A549 (cell line): ENCODE measurements at regions of chr3 and their contacts with region 1.

Region 1: DNA sequence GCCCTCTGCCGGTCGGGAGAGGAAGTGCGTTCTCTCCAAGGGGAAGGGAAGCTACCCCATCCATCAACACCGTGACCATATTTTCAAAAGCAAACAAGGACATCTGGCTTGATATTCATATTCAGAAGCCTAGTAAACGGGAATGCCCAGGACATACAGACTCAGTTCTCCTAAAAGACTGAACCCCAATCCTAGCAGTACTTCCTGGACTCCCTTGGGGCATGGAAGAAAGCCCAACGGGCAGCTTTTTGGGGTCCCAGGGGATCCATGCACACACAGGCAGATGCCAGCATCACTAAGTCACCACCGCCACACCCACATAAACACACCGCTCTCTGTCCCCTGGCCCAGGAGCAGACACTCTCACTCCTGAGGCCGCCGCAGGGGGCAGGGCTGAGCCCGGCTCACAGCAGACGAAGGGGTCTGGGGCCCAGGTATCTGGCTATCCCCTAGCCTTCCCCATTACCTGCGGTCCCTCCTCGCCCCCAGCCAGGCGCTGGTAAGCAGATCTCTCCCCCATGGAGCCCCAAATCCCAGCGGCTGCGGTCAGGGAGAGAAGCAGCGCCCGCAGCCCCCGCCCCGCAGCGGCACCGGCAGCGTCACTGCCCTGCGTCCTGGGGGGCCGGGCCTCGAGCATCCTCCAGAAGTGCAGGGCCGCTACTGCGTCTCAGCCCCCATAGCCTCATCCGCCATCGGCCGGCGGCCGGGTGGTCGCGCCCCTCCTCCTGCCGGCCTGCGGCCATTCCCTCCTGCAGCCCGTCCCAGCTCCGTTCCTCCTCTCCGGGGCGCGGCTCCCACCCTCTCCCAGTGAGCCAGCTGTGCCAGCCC is 13.4 kb downstream of the TNK2 start:
- DNase-seq: peak; percentile 78 to 79
- ATAC-seq: peak; percentile 83 to 84
- H3K4me3 ChIP-seq: peak overlapping the region; percentile 77
- H3K27ac ChIP-seq: peak overlapping the region; percentile 91 to 96
- H3K4me1 ChIP-seq: peaks cover 18% of the 10 kb centered on the region
- CTCF ChIP-seq: peak; percentile 75
- EP300 ChIP-seq: no peak
- POLR2A ChIP-seq: no peak
- RAD21 ChIP-seq: peak; percentile 77 to 81

Region 2: GRCh38 chr3:195870442-195870841 is 24.6 kb before region 1 on chr3:
- CTCF ChIA-PET with region 1: interaction called, 34 read pairs
- POLR2A ChIA-PET with region 1: no interaction called
- DNase-seq: peak in 1 of 2 experiments; percentile 28
- ATAC-seq: peak; percentile 53 to 74; a peak in 5 of 6 replicates
- H3K4me3 ChIP-seq: no peak overlapping the region
- H3K27ac ChIP-seq: peak overlapping the region in 1 of 2 experiments; percentile 57; a peak in 2 of 6 replicates
- H3K4me1 ChIP-seq: peaks cover 13% of the 10 kb centered on the region; the same call in 1 of the 3 replicates
- CTCF ChIP-seq: no peak
- EP300 ChIP-seq: no peak
- POLR2A ChIP-seq: no peak
- RAD21 ChIP-seq: no peak

Region 3: GRCh38 chr3:195876297-195877031 is 18.5 kb before region 1 on chr3:
- CTCF ChIA-PET with region 1: interaction called, 34 read pairs
- POLR2A ChIA-PET with region 1: no interaction called
- DNase-seq: peak; percentile 44 to 50
- ATAC-seq: peak; percentile 70 to 71; a peak in 4 of 6 replicates
- H3K4me3 ChIP-seq: no peak overlapping the region
- H3K27ac ChIP-seq: peak overlapping the region in 1 of 2 experiments; percentile 69; a peak in 3 of 6 replicates
- H3K4me1 ChIP-seq: peaks cover 15% of the 10 kb centered on the region
- CTCF ChIP-seq: no peak
- EP300 ChIP-seq: no peak
- POLR2A ChIP-seq: no peak
- RAD21 ChIP-seq: no peak